CD8-positive, alpha-beta T cell (primary cell): ENCODE measurements at regions of chr1 and their contacts with region 1.

Region 1: DNA sequence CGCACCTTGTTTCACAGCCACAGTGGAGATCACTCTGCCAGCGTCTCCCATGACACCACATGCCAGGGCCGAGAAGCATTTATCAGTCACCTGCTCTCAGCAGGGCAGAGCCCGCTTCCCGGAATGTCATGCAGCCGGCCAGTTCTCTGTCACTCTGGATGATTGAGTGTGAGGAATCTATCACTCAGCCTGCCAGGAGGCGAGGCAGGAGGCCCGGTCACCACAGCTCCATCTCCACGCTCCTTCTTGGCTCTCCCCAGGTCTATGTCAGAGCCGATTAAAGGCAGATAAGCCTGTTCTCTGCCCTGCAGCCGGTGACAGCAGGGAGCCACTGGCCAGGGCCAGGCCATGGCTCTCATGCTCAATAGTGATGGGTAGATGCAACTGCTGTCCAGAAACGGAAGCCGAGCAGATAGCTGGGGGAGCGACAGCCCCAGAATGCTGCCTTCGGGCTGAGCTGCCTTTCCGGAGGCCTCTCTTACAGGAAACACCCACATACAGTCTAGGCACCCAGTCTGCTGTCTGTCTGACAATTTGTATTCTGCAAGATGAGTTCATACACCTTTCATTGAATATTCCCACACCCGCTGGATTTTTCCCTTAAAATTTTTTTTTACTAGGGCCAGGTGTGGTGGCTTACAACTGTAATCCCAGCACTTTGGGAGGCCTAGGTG is 64.1 kb downstream of the ACTL8 start:
- DNase-seq: no peak
- ATAC-seq: no peak
- H3K4me3 ChIP-seq: no peak overlapping the region
- H3K4me3 Mint-ChIP-seq: no peak overlapping the region
- H3K27ac ChIP-seq: no peak overlapping the region
- H3K27ac Mint-ChIP-seq: no peak overlapping the region
- H3K4me1 ChIP-seq: no peaks in the 10 kb centered on the region
- H3K4me1 Mint-ChIP-seq: no peaks in the 10 kb centered on the region
- H3K27me3 ChIP-seq: no peaks in the 10 kb centered on the region
- H3K27me3 Mint-ChIP-seq: peaks cover 16% of the 10 kb centered on the region
- CTCF ChIP-seq: no peak

Region 2: DNA sequence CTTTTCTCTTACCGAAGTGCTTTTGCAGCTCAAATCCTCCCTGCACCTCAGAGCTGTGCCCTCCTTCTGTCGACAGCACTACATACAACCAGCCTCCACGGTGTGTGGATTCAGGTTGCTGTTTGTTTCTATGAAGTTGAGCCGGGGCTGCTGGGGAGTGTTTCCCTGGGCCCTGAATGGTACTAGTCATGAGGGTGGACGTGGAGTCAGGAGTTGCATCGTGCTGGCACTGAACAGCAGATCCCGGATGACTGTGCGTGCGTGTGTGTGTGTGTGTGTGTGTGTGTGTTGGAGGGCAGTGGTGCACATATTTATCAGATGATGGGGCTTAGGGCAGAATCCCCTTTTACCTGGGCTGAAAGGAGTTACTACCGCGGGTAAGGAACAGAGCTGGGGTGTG is 17.1 kb before region 1 on chr1:
- CTCF ChIA-PET with region 1: no interaction called
- POLR2A ChIA-PET with region 1: no interaction called
- intact Hi-C with region 1: no loop called
- DNase-seq: no peak
- ATAC-seq: no peak
- H3K4me3 ChIP-seq: no peak overlapping the region
- H3K4me3 Mint-ChIP-seq: no peak overlapping the region
- H3K27ac ChIP-seq: no peak overlapping the region
- H3K27ac Mint-ChIP-seq: no peak overlapping the region
- H3K4me1 ChIP-seq: no peaks in the 10 kb centered on the region
- H3K4me1 Mint-ChIP-seq: no peaks in the 10 kb centered on the region
- H3K27me3 ChIP-seq: no peaks in the 10 kb centered on the region
- H3K27me3 Mint-ChIP-seq: peaks cover 18% of the 10 kb centered on the region
- CTCF ChIP-seq: no peak

Region 3: DNA sequence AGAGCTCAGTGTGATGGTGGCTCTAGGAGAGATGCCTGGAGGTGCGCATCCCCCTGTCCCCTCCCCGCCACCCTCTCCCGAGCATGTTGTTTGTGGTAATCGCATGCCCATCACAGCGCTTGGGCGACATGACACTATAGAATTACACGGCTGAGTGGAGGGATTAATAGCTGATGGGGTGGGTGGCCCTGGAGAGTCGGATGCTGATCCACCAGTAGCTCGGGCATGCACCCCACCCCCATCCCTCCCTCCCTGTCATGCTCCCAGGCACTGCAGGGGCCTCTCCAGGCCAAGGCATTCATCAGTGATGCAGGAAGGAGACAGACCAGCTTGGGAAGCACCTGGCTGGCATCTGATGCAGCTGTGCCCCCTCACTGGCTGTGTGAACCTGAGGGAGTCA is 129.3 kb after region 1 on chr1:
- CTCF ChIA-PET with region 1: no interaction called
- POLR2A ChIA-PET with region 1: no interaction called
- intact Hi-C with region 1: loop called in 1 of 2 experiments (anchors 5 kb)
- DNase-seq: no peak
- ATAC-seq: no peak
- H3K4me3 ChIP-seq: no peak overlapping the region
- H3K4me3 Mint-ChIP-seq: no peak overlapping the region
- H3K27ac ChIP-seq: no peak overlapping the region
- H3K27ac Mint-ChIP-seq: no peak overlapping the region
- H3K4me1 ChIP-seq: no peaks in the 10 kb centered on the region
- H3K4me1 Mint-ChIP-seq: peaks cover 7% of the 10 kb centered on the region
- H3K27me3 ChIP-seq: no peaks in the 10 kb centered on the region
- H3K27me3 Mint-ChIP-seq: peaks cover 27% of the 10 kb centered on the region
- CTCF ChIP-seq: no peak